PC-9 (cell line): ENCODE measurements at regions of chr10 and their contacts with region 1.

Region 1: GRCh38 chr10:71835671-71836595 is 15.1 kb downstream of the PSAP start:
- DNase-seq: peak in 1 of 2 experiments; percentile 28
- H3K4me3 ChIP-seq: no peak overlapping the region
- H3K27ac ChIP-seq: no peak overlapping the region
- H3K4me1 ChIP-seq: peaks cover 52% of the 10 kb centered on the region
- H3K27me3 ChIP-seq: no peaks in the 10 kb centered on the region
- CTCF ChIP-seq: no peak

Region 2: GRCh38 chr10:71850637-71851464 is 14.9 kb after region 1 on chr10 and contains the start of gene PSAP:
- CTCF ChIA-PET with region 1: interaction called, 3 read pairs
- POLR2A ChIA-PET with region 1: interaction called, 7 read pairs
- intact Hi-C with region 1: loop called (anchors 1 kb)
- DNase-seq: peak; percentile 97 to 100
- H3K4me3 ChIP-seq: peak within 1 kb of the TSS; percentile 87
- H3K27ac ChIP-seq: peak within 1 kb of the TSS; percentile 76
- H3K4me1 ChIP-seq: peaks cover 47% of the 10 kb centered on the region
- H3K27me3 ChIP-seq: no peaks in the 10 kb centered on the region
- CTCF ChIP-seq: no peak
- total RNA-seq, gene PSAP: 683 and 1,027 TPM in 2 replicates

Region 3: DNA sequence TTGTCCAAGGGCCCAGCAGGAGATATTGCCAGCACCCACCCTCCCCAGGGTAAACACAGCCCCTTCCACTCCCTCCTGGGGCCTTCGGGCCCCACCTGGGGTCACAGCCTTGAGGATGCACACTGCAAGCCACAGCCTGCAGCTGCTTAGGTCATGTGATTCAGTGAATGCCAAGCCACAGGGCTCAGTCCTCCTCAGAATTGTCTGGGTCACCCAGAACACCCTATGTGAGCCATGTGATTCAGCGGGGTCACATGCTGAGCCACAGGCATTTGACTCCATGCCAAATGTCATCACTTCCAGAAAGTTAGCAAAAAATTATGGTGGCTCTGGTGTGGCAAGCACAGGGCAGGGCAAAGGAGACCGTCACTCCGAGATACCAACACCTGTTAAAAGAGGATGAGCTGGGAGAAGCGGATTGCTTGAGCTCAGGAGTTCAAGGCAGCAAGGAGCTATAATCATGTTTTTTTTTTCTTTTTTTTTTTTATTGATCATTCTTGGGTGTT is 32.3 kb after region 1 on chr10:
- CTCF ChIA-PET with region 1: interaction called, 10 read pairs
- POLR2A ChIA-PET with region 1: interaction called, 13 read pairs
- intact Hi-C with region 1: loop called (anchors 2 kb)
- DNase-seq: peak; percentile 92 to 95
- H3K4me3 ChIP-seq: no peak overlapping the region
- H3K27ac ChIP-seq: peak overlapping the region; percentile 70
- H3K4me1 ChIP-seq: peaks cover 59% of the 10 kb centered on the region
- H3K27me3 ChIP-seq: no peaks in the 10 kb centered on the region
- CTCF ChIP-seq: no peak

Region 4: DNA sequence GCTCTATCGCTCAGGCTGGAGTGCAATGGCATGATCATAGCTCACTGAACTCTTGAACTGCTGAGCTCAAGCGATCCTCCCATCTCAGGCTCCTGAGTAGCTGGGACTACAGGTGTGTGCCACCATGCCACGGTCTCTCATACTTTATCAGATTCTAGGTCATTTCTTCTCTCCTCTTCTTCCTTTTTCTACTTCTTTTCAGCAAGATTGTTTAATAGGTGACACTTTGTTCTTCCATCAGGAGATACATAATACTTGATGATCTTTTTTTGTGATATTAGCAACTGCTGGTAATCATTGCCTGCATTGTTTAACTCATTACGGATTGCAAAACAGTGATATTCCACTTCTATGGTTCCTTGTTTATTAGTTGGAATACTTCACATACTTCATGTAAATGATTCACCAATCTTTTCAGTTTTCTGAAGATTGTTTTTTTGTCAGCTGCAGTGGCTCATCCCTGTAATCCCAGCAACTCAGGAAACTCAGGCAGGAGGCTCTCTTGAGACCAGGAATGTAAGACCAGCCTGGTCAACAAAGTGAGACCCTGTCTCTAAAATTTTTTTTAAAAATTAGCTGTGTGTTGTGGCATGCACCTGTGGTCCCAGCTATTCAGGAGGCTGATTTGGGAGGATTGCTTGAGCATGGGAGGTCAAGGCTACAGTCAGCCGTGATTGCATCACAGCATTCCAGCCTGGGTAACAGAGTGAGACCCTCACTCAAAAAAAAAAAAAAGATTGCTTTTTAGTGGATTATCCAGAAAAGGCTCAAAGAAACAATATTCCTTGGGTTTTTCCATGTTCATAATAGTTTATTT is 92.1 kb after region 1 on chr10:
- CTCF ChIA-PET with region 1: no interaction called
- POLR2A ChIA-PET with region 1: no interaction called
- intact Hi-C with region 1: no loop called
- DNase-seq: peak in 1 of 2 experiments; percentile 77
- H3K4me3 ChIP-seq: no peak overlapping the region
- H3K27ac ChIP-seq: no peak overlapping the region
- H3K4me1 ChIP-seq: 0 out of 2 replicates have a peak, but pooled peaks cover 3% of the 10 kb centered on the region
- H3K27me3 ChIP-seq: no peaks in the 10 kb centered on the region
- CTCF ChIP-seq: no peak

Region 5: GRCh38 chr10:71963756-71964668 is 128.1 kb after region 1 on chr10 and contains the start of gene CHST3:
- CTCF ChIA-PET with region 1: interaction called, 3 read pairs
- POLR2A ChIA-PET with region 1: no interaction called
- intact Hi-C with region 1: loop called (anchors 10 kb)
- DNase-seq: peak in 1 of 2 experiments; percentile 58
- H3K4me3 ChIP-seq: peak within 1 kb of the TSS; percentile 74
- H3K27ac ChIP-seq: no peak within 1 kb of the TSS
- H3K4me1 ChIP-seq: peaks cover 41% of the 10 kb centered on the region
- H3K27me3 ChIP-seq: no peaks in the 10 kb centered on the region
- CTCF ChIP-seq: no peak
- total RNA-seq, gene CHST3: 21.3 and 23.3 TPM in 2 replicates

Region 6: GRCh38 chr10:73306171-73306708 is 1470.3 kb after region 1 on chr10:
- CTCF ChIA-PET with region 1: no interaction called
- POLR2A ChIA-PET with region 1: no interaction called
- intact Hi-C with region 1: no loop called
- DNase-seq: no peak
- H3K4me3 ChIP-seq: no peak overlapping the region
- H3K27ac ChIP-seq: no peak overlapping the region
- H3K4me1 ChIP-seq: no peaks in the 10 kb centered on the region
- H3K27me3 ChIP-seq: no peaks in the 10 kb centered on the region
- CTCF ChIP-seq: no peak